ENCODE measurements at regions of chr18 and their contacts with region 1.

Region 1: GRCh38 chr18:49639643-49640391 is 78.0 kb downstream of the LIPG start:
- DNase-seq: no peak
- H3K4me3 ChIP-seq: no peak overlapping the region
- CTCF ChIP-seq: no peak

Region 2: DNA sequence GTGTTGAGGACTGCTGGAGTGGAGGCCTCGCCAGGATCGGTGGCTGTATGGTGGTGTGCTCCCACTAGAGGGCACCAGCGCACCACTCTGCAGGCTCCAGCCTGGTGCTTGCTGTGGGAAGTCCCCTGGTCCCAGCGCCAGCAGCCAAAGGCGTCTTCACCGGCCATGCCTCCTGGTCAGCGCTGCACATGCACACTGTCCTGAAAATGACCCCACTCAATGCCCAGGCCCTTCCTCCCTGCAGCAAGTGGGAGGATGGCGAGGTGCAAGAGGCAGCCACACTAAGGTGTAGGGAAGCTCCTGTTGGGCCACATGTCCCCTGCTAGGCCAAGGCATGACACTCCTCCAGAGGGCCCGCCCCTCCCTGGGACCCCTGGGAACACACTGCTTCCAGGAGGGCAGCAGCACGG is 964.5 kb before region 1 on chr18:
- in situ Hi-C with region 1: no loop called
- DNase-seq: peak; percentile 57
- H3K4me3 ChIP-seq: no peak overlapping the region
- CTCF ChIP-seq: peak; percentile 88

Region 3: DNA sequence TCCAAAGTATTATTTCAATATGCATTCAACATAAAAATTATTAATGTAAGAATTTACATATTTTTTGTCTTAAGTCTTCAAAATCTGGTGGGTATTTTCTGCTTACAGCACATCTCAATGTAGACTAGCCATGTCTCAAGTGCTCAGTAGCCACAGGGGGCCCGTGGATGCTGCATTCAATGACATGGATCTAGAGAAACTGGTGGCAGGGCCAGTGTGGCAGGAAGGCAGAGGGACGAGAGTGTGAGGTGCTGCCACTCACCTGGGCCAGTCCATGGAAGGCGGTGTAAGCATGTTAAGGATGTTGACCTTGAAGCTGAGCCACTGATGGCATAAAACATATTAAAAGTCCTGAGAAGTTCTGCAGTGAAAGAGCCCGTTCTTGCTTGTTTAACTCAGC is 84.2 kb before region 1 on chr18:
- in situ Hi-C with region 1: loop called (anchors 5 kb)
- DNase-seq: no peak
- H3K4me3 ChIP-seq: no peak overlapping the region
- CTCF ChIP-seq: no peak

Region 4: GRCh38 chr18:49681387-49681786 is 41.6 kb after region 1 on chr18:
- in situ Hi-C with region 1: loop called (anchors 5 kb)
- DNase-seq: no peak
- H3K4me3 ChIP-seq: no peak overlapping the region
- CTCF ChIP-seq: no peak